ENCODE measurements at regions of chr13 and their contacts with region 1.

Region 1: GRCh38 chr13:73303851-73304250 is 245.0 kb downstream of the KLF5 start:
- DNase-seq: peak; percentile 75
- H3K4me3 Mint-ChIP-seq: no peak overlapping the region
- H3K27ac Mint-ChIP-seq: no peak overlapping the region
- H3K4me1 Mint-ChIP-seq: peaks cover 13% of the 10 kb centered on the region
- H3K27me3 Mint-ChIP-seq: peaks cover 2% of the 10 kb centered on the region

Region 2: DNA sequence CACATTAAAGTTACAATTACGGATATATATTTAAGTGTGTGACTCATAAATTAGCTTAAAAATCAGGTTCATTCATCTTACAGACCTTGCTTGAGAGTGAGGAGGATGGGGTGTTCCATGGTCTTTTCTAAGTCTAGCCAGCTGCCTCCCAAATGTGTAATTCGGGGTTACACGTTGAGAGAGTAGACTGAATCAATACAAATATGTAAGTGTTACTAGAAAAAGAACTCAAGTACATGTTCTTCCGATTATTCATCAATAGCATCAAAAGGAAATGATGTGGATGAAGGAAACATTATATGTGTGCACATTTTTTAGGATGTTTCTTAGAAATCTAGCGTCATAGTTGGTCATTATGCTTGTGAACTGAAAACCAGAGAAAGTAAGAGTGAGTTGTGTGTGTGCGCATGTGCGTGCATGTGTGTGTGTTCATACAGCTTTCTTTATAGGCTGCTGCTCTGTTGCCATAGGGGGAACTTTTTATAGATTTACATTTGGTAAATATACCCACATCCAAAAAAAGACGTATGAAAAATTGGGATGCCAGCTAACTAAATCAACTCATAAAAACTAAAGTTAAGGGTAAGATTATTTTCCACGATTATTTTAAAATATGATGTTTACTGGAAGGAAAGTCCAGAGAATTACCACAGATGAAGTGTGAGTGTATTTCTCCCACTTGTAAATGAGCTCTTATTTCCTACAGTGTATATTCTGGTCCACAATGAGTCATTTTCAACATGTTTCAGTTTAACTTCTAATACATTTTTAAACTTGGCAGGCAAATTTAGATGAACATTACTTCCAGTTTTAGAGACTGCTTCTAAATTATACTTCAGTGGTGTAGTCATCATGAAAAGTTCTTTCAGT is 439.5 kb before region 1 on chr13:
- CTCF ChIA-PET with region 1: no interaction called
- POLR2A ChIA-PET with region 1: no interaction called
- intact Hi-C with region 1: loop called (anchors 1 kb)
- DNase-seq: peak; percentile 51
- H3K4me3 Mint-ChIP-seq: peak overlapping the region; percentile 17
- H3K27ac Mint-ChIP-seq: peak overlapping the region; percentile 83
- H3K4me1 Mint-ChIP-seq: peaks cover 20% of the 10 kb centered on the region
- H3K27me3 Mint-ChIP-seq: no peaks in the 10 kb centered on the region

Region 3: DNA sequence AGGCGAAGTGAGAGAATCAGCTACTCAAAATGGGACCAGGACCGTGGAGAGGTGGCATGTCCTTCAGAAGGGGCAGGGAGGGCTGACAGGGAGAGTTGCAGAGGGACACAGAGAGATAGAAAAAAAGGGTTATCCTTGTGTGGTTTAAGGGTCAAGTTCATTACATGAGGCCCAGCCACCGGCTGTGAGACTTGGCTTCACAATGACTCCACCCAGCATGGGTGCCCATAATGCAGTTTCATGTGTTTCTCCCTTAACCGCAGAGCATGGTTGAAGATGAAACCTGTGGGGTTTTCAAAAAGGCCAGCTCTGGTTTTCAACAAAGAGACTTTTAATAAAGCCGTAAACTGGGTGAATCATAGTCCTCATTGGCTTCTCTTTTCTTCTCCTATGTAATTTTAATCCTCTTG is 80.5 kb before region 1 on chr13:
- CTCF ChIA-PET with region 1: no interaction called
- POLR2A ChIA-PET with region 1: no interaction called
- intact Hi-C with region 1: loop called (anchors 2 kb)
- DNase-seq: peak; percentile 70
- H3K4me3 Mint-ChIP-seq: no peak overlapping the region
- H3K27ac Mint-ChIP-seq: no peak overlapping the region
- H3K4me1 Mint-ChIP-seq: peaks cover 24% of the 10 kb centered on the region
- H3K27me3 Mint-ChIP-seq: peaks cover 4% of the 10 kb centered on the region

Region 4: DNA sequence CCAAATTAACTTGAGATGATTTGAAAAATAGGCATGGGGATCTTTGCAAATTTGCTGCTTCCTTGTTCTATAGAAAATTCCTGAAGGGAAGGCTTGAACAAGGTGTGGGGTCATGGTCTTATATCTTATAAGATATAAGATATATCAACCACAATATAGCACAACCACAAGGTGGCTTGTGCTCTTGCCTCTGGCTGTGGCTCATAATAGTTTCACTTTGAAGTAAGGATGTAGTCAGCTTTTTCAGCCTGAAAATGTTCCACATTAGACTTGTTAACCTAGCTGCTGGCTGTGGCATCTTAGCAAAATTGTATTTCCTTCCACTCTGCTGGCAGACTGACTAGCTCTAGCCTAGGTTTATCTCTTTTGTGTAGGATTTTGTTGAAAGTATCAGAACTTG is 75.3 kb before region 1 on chr13:
- CTCF ChIA-PET with region 1: no interaction called
- POLR2A ChIA-PET with region 1: no interaction called
- intact Hi-C with region 1: loop called (anchors 2 kb)
- DNase-seq: peak; percentile 16
- H3K4me3 Mint-ChIP-seq: no peak overlapping the region
- H3K27ac Mint-ChIP-seq: no peak overlapping the region
- H3K4me1 Mint-ChIP-seq: peaks cover 38% of the 10 kb centered on the region
- H3K27me3 Mint-ChIP-seq: peaks cover 4% of the 10 kb centered on the region

Region 5: DNA sequence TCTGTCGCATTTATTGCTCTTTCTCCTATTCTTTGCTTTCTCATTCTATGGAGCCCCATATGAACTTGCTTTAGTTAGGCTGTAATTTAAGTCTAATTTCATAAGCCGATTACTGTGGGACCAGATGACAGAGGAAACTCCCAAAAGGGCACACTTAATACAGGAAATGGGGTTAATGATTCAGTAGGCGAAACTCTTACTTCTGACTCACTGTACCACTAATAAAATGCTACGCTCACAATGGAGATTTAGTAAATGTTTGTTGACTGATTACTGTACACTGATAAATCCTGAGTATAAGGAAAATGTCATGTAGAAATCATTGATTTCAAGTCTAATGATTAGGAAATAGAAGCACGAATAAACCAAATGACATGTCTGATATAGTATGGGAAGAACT is 31.4 kb after region 1 on chr13:
- CTCF ChIA-PET with region 1: no interaction called
- POLR2A ChIA-PET with region 1: no interaction called
- intact Hi-C with region 1: loop called (anchors 2 kb)
- DNase-seq: no peak
- H3K4me3 Mint-ChIP-seq: no peak overlapping the region
- H3K27ac Mint-ChIP-seq: no peak overlapping the region
- H3K4me1 Mint-ChIP-seq: peaks cover 13% of the 10 kb centered on the region
- H3K27me3 Mint-ChIP-seq: no peaks in the 10 kb centered on the region

Region 6: DNA sequence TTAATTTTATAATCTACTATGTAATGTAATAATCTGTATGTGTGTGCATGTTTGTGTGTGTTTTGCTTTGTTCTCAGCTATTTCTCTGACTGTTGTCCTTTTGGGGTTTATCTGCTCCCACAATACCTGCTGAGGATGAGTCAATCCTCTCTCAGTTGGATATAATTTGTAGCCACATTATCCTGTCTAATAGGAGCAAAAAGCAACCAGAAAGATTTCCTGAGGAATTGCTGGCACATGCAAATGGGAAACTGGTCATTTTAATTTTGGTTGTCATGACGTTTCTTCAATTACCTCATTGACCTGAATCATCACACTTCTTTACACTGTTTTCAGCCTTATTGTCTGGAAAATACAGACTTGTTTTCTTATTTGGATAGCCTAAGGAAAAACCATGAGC is 243.4 kb after region 1 on chr13:
- CTCF ChIA-PET with region 1: no interaction called
- POLR2A ChIA-PET with region 1: no interaction called
- intact Hi-C with region 1: no loop called
- DNase-seq: no peak
- H3K4me3 Mint-ChIP-seq: no peak overlapping the region
- H3K27ac Mint-ChIP-seq: no peak overlapping the region
- H3K4me1 Mint-ChIP-seq: no peaks in the 10 kb centered on the region
- H3K27me3 Mint-ChIP-seq: peaks cover 5% of the 10 kb centered on the region